Heart left ventricle (tissue), 16 donors: ENCODE measurements at regions of chr2 and their contacts with region 1.

Region 1: DNA sequence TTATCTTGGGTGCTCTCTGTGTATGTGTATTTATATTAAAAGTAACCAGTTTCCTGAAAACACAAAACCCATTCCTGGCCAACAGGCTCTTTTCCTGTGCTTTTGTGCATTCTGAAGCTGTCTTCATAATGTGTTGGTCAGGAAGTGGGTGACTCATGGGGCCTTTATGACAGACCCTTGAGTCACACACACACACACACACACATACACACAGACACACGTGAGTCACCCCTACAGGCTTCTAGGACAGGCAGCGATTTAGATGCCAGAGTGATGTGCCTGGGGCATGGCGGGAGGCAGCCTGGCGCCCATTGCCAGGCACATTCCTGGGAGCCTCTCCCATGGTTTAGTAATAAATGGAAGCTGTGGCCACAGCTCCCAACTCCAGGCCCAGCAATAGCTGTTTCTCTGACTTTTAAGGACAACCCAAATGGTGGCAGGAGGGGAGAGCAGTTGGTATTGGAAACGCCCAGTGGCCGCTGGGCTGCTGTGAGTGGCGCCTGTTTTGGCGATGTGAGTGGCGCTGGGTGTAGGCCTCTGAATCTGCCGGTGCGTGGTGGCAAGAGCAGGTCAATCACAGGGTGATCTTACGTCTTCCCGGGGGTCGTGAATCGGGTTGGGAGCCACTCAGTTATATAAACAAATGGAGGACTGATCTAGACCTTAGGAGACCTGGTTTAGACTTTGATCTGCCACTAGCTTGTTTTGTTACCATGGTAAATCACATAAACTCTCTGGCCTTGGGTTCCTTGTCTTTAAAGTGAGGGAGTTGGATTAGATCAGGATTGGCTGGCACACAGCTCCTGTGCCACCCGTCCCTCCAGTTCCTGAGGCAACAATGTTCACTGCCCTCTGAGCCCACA is 150.7 kb upstream of the DLX2 start:
- DNase-seq: peak in 3 of 5 donors; percentile 56 to 71 (median 59)
- ATAC-seq: peak; percentile 44 to 89 (median 86)
- H3K4me3 ChIP-seq: no peak overlapping the region
- H3K27ac ChIP-seq: peak overlapping the region in 11 of 12 donors; percentile 7 to 84 (median 77)
- H3K4me1 ChIP-seq: peaks cover 0 to 30% (median 9%) of the 10 kb centered on the region in 12 donors
- H3K27me3 ChIP-seq: no peaks in the 10 kb centered on the region
- CTCF ChIP-seq: no peak
- POLR2A ChIP-seq: no peak

Region 2: DNA sequence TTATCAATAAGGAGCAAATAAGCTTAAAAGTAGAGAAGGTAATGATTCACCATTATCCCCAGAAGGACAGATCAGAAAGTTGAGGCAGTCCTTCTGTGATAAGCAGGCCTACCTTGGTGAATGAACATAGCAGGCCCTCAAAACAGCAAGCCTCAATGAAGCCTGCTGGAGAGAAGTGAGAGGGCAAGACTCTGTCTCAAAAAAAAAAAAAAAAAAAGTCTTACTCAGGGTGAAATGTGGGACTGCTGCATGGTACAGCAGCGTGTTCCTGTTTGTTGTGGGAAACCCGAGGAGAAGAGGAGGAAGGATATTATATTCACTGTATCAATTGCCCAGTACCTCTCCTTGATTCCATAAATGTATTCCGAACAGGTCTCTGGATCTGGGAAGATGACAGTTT is 339.9 kb before region 1 on chr2:
- intact Hi-C with region 1: no loop called
- DNase-seq: no peak
- ATAC-seq: no peak
- H3K4me3 ChIP-seq: no peak overlapping the region
- H3K27ac ChIP-seq: no peak overlapping the region
- H3K4me1 ChIP-seq: no peaks in the 10 kb centered on the region
- H3K27me3 ChIP-seq: no peaks in the 10 kb centered on the region
- CTCF ChIP-seq: no peak
- POLR2A ChIP-seq: no peak

Region 3: GRCh38 chr2:172307800-172308199 is 54.4 kb after region 1 on chr2:
- intact Hi-C with region 1: loop called in 1 of 10 experiments (anchors 5 kb)
- DNase-seq: peak in 4 of 5 donors; percentile 33 to 63 (median 57)
- ATAC-seq: peak; percentile 14 to 55 (median 42)
- H3K4me3 ChIP-seq: no peak overlapping the region
- H3K27ac ChIP-seq: peak overlapping the region in 9 of 12 donors; percentile 18 to 67 (median 56)
- H3K4me1 ChIP-seq: peaks cover 0 to 39% (median 12%) of the 10 kb centered on the region in 12 donors
- H3K27me3 ChIP-seq: no peaks in the 10 kb centered on the region
- CTCF ChIP-seq: no peak
- POLR2A ChIP-seq: no peak

Region 4: DNA sequence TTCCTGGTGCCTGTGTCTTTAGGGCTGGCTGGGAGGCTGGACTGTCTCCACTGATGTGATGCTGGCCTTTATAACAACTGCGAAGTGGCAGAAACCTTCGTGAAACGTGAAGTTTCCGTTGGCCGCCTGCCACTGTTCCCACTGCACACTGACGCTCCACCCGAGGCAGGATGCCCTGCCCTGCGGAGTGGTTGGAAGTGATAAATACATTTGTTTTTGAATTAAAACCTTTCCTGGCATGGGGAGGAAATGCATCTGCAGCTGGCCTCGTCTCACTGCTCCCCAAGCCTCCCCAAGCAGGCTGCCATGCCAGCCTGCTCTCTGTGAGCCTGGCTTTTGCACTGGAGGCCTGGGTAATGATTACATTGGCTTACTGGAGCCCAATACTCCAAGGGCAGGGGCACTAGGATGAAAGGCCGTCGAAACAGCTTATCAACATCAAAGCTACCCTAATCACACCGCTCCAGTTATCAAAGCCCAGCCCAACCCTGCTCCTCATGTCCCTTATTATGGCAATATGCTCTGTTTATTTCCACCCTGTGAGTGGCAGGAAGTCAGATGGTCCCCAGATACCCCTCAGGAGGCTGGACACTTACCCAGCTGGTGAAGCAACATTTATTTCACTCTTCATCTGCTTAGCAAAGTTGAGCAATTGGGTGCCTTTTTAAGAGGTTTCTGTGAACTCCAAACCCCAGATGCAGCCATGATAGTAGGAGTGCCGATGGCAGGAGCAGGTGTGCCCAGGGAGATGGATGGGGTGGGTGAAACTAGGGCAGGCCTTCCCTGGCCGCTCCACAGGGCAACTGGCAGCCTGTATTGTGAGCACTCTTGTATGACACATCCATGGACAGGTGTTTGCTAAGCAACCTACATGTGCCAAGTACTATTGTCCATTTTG is 76.6 kb after region 1 on chr2:
- intact Hi-C with region 1: loop called in 1 of 10 experiments (anchors 10 kb)
- DNase-seq: peak; percentile 74 to 82 (median 78)
- ATAC-seq: peak; percentile 81 to 93 (median 86)
- H3K4me3 ChIP-seq: no peak overlapping the region
- H3K27ac ChIP-seq: peak overlapping the region in 11 of 12 donors; percentile 21 to 83 (median 52)
- H3K4me1 ChIP-seq: peaks cover 0 to 33% (median 10%) of the 10 kb centered on the region in 12 donors
- H3K27me3 ChIP-seq: no peaks in the 10 kb centered on the region
- CTCF ChIP-seq: no peak
- POLR2A ChIP-seq: no peak